CD8-positive, alpha-beta memory T cell (primary cell): ENCODE measurements at regions of chr12 and their contacts with region 1.

Region 1: GRCh38 chr12:25250744-25251730 is at the start of gene KRAS:
- DNase-seq: peak; percentile 86 to 95 (median 88)
- H3K4me3 ChIP-seq: peak within 1 kb of the TSS; percentile 84
- H3K4me3 Mint-ChIP-seq: peak within 1 kb of the TSS; percentile 91 to 96 (median 94)
- H3K27ac ChIP-seq: peak within 1 kb of the TSS; percentile 68
- H3K27ac Mint-ChIP-seq: peak within 1 kb of the TSS; percentile 84 to 99 (median 96)
- H3K4me1 ChIP-seq: peaks cover 5% of the 10 kb centered on the region
- H3K4me1 Mint-ChIP-seq: peaks cover 28 to 48% (median 43%) of the 10 kb centered on the region in 3 donors
- H3K27me3 ChIP-seq: no peaks in the 10 kb centered on the region
- H3K27me3 Mint-ChIP-seq: no peaks in the 10 kb centered on the region
- total RNA-seq, gene KRAS: 24.9 to 25.6 TPM

Region 2: GRCh38 chr12:25052196-25052913 is 198.7 kb before region 1 on chr12:
- CTCF ChIA-PET with region 1: interaction called, 3 read pairs
- POLR2A ChIA-PET with region 1: interaction called, 22 read pairs
- DNase-seq: peak; percentile 19 to 87 (median 70)
- H3K4me3 ChIP-seq: peak overlapping the region; percentile 64
- H3K4me3 Mint-ChIP-seq: peak overlapping the region; percentile 91 to 100 (median 98)
- H3K27ac ChIP-seq: peak overlapping the region; percentile 78
- H3K27ac Mint-ChIP-seq: peak overlapping the region; percentile 91 to 99 (median 98)
- H3K4me1 ChIP-seq: peaks cover 38% of the 10 kb centered on the region
- H3K4me1 Mint-ChIP-seq: peaks cover 43 to 55% (median 49%) of the 10 kb centered on the region in 3 donors
- H3K27me3 ChIP-seq: no peaks in the 10 kb centered on the region
- H3K27me3 Mint-ChIP-seq: peaks cover 0 to 3% of the 10 kb centered on the region in 2 donors

Region 3: DNA sequence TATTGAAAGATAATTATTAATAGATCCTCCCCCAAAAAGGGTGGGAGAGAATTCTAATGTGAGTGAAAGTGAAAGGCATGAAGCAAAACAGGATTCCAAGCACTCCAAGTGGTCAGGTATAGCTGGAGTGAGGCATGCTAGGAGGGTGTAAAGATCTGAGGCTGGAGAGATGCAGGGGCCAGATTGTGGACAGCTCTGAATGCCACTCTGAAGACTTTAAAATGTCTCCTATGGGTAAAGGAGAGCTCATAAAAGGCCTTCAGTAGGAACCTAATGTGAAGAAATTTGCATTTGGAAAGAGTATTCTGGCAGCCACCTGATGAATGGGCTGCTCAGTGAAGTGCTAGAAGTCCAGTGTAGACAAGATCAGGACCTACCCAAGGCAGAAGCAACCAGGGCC is 125.0 kb before region 1 on chr12:
- CTCF ChIA-PET with region 1: no interaction called
- POLR2A ChIA-PET with region 1: no interaction called
- DNase-seq: no peak
- H3K4me3 ChIP-seq: no peak overlapping the region
- H3K4me3 Mint-ChIP-seq: no peak overlapping the region
- H3K27ac ChIP-seq: no peak overlapping the region
- H3K27ac Mint-ChIP-seq: no peak overlapping the region
- H3K4me1 ChIP-seq: no peaks in the 10 kb centered on the region
- H3K4me1 Mint-ChIP-seq: no peaks in the 10 kb centered on the region
- H3K27me3 ChIP-seq: no peaks in the 10 kb centered on the region
- H3K27me3 Mint-ChIP-seq: no peaks in the 10 kb centered on the region

Region 4: DNA sequence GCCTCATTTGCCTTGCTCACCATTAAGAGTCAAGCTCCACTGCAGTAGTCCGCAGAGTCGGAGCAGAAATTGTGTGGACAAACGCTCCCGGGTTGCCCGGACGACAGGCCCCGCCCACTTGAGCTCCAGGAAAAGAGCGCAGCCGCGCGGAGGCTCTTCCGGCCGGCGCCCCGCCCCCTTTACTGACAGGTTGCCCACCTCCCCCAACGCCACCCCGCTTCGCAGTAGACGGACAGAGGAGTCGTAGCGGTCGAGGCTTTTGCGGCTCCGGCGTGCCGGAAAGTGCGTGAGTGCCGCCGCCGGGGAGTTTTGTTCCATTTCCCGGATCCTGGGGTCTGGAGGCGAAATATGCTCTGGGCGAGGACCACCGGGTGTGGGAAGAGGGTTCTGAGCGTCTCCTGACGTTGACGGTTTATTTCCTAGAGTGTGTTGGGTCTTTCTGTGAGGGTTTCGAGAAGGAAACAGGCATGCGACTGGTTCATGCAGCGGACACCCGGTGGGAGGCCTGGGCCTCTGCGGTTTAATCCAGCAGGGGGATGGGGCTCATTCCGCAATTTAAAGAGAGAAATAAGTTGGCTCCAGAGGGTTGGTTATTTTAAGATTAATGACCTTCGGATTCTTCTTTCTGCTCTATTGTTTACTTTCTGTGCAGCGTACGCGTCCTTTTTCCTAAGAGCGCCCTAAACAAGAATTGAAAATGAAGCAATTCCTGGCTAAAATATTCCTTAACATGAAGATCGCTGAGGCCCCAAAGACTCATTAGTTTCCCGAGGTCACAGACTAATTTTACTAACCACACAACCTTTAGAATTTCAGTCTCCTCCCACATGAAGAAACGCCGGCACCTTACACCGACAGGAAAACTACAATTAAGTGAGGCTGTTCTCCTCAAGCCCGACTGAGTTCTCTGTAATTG is 55.7 kb before region 1 on chr12 and contains the starts of genes DNAI7 and ETFRF1:
- CTCF ChIA-PET with region 1: no interaction called
- POLR2A ChIA-PET with region 1: interaction called, 10 read pairs
- DNase-seq: peak; percentile 95 to 98 (median 96)
- H3K4me3 ChIP-seq: peak within 1 kb of the TSS; percentile 84
- H3K4me3 Mint-ChIP-seq: peak within 1 kb of the TSS; percentile 96 to 99 (median 97)
- H3K27ac ChIP-seq: peak within 1 kb of the TSS; percentile 95
- H3K27ac Mint-ChIP-seq: peak within 1 kb of the TSS; percentile 99 to 100 (median 99)
- H3K4me1 ChIP-seq: peaks cover 15% of the 10 kb centered on the region
- H3K4me1 Mint-ChIP-seq: peaks cover 31 to 54% (median 49%) of the 10 kb centered on the region in 3 donors
- H3K27me3 ChIP-seq: no peaks in the 10 kb centered on the region
- H3K27me3 Mint-ChIP-seq: peaks cover 0 to 6% of the 10 kb centered on the region in 2 donors
- total RNA-seq, gene DNAI7: not detected
- total RNA-seq, gene ETFRF1: 12.4 to 14.4 TPM

Region 5: DNA sequence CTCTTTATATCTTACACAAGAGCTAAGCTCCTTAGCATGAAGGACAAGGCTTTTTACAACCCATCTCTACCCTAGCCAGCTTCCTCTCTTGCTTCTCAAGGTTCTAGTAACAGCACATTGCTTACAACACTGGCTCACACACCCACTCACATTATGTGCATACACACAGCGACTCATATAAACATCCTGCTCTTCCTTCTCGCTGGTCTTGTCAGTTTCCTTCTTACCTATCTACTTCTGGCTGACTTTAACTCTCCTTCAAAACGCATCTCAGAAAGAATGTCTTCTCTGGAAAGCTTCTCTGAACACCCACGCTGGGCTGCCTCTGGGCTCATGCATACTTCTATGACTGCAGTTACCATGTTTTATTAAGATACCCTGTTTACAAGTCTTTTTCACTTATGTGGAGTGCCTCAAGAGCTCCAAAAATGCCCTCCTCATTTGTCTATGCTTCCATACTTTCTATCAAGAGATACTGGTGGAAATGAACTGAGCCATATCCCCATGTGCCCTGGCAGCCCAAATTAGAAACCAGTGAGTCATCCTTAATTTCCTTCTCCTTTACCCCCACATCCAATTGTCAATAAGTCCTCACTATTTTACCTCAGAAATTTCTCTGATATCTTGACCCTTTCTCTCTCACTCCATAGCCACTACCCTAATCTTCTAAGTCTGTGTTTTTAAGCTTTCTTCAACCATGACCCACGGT is 126.6 kb after region 1 on chr12:
- CTCF ChIA-PET with region 1: interaction called, 6 read pairs
- POLR2A ChIA-PET with region 1: interaction called, 13 read pairs
- DNase-seq: peak in 2 of 5 donors; percentile 31 to 60
- H3K4me3 ChIP-seq: peak overlapping the region; percentile 6
- H3K4me3 Mint-ChIP-seq: peak overlapping the region in 6 of 7 donors; percentile 25 to 73 (median 40)
- H3K27ac ChIP-seq: peak overlapping the region; percentile 26
- H3K27ac Mint-ChIP-seq: peak overlapping the region; percentile 16 to 95 (median 88)
- H3K4me1 ChIP-seq: peaks cover 32% of the 10 kb centered on the region
- H3K4me1 Mint-ChIP-seq: peaks cover 21 to 36% (median 27%) of the 10 kb centered on the region in 3 donors
- H3K27me3 ChIP-seq: no peaks in the 10 kb centered on the region
- H3K27me3 Mint-ChIP-seq: no peaks in the 10 kb centered on the region